A673 (cell line): ENCODE measurements at regions of chr9 and their contacts with region 1.

Region 1: GRCh38 chr9:78121488-78121887 is 89.9 kb upstream of the GNAQ start:
- DNase-seq: peak; percentile 82
- H3K4me3 ChIP-seq: no peak overlapping the region
- H3K27ac ChIP-seq: no peak overlapping the region
- H3K4me1 ChIP-seq: peaks cover 4% of the 10 kb centered on the region
- H3K27me3 ChIP-seq: no peaks in the 10 kb centered on the region
- CTCF ChIP-seq: peak; percentile 83

Region 2: GRCh38 chr9:77291714-77292113 is 829.8 kb before region 1 on chr9:
- CTCF ChIA-PET with region 1: no interaction called
- POLR2A ChIA-PET with region 1: no interaction called
- intact Hi-C with region 1: loop called (anchors 10 kb)
- DNase-seq: peak; percentile 75
- H3K4me3 ChIP-seq: no peak overlapping the region
- H3K27ac ChIP-seq: no peak overlapping the region
- H3K4me1 ChIP-seq: no peaks in the 10 kb centered on the region
- H3K27me3 ChIP-seq: no peaks in the 10 kb centered on the region
- CTCF ChIP-seq: peak; percentile 71

Region 3: GRCh38 chr9:77456829-77457437 is 664.6 kb before region 1 on chr9:
- CTCF ChIA-PET with region 1: no interaction called
- POLR2A ChIA-PET with region 1: no interaction called
- intact Hi-C with region 1: loop called (anchors 5 kb)
- DNase-seq: peak; percentile 95
- H3K4me3 ChIP-seq: no peak overlapping the region
- H3K27ac ChIP-seq: peak overlapping the region; percentile 70
- H3K4me1 ChIP-seq: peaks cover 20% of the 10 kb centered on the region
- H3K27me3 ChIP-seq: no peaks in the 10 kb centered on the region
- CTCF ChIP-seq: peak; percentile 94

Region 4: GRCh38 chr9:77751341-77752091 is 370.0 kb before region 1 on chr9:
- CTCF ChIA-PET with region 1: no interaction called
- POLR2A ChIA-PET with region 1: no interaction called
- intact Hi-C with region 1: loop called (anchors 5 kb)
- DNase-seq: peak; percentile 93
- H3K4me3 ChIP-seq: no peak overlapping the region
- H3K27ac ChIP-seq: peak overlapping the region; percentile 86
- H3K4me1 ChIP-seq: peaks cover 50% of the 10 kb centered on the region
- H3K27me3 ChIP-seq: no peaks in the 10 kb centered on the region
- CTCF ChIP-seq: peak; percentile 75

Region 5: GRCh38 chr9:78035383-78035993 is 86.0 kb before region 1 on chr9:
- CTCF ChIA-PET with region 1: no interaction called
- POLR2A ChIA-PET with region 1: no interaction called
- intact Hi-C with region 1: loop called (anchors 5 kb)
- DNase-seq: peak; percentile 89
- H3K4me3 ChIP-seq: no peak overlapping the region
- H3K27ac ChIP-seq: no peak overlapping the region
- H3K4me1 ChIP-seq: peaks cover 38% of the 10 kb centered on the region
- H3K27me3 ChIP-seq: no peaks in the 10 kb centered on the region
- CTCF ChIP-seq: peak; percentile 92